Activated CD8-positive, alpha-beta memory T cell treated with anti-CD3 and anti-CD28 coated beads, Interleukin-2, amount 10 ng/mL, durations not matched to agents 7 days and 5 days (primary cell): ENCODE measurements at regions of chr1 and their contacts with region 1.

Region 1: DNA sequence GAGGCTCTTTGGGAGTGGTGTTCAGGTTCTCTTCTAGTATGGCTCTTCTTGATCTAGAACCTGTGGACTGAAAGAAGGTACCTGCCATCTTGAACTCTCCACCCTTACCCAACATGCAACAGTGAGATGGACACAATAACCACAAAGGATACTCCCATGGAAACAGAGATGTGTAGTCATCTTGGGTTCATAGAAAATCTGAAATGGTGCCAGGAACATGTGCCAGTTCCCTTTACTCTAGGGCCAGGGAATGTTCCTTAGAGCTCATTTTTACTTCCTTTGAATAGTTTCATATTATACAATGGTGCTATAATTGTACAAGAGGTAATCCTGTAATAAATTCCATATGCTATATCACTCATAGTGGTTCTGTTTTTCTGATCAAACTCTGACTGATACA is 13.2 kb upstream of the SCYL3 start:
- DNase-seq: no peak
- ATAC-seq: no peak
- H3K4me3 Mint-ChIP-seq: no peak overlapping the region
- H3K27ac Mint-ChIP-seq: no peak overlapping the region
- H3K4me1 Mint-ChIP-seq: peaks cover 45% of the 10 kb centered on the region
- H3K27me3 Mint-ChIP-seq: peaks cover 4% of the 10 kb centered on the region

Region 2: GRCh38 chr1:169779178-169779577 is 127.8 kb before region 1 on chr1:
- CTCF ChIA-PET with region 1: no interaction called
- DNase-seq: no peak
- ATAC-seq: no peak
- H3K4me3 Mint-ChIP-seq: no peak overlapping the region
- H3K27ac Mint-ChIP-seq: no peak overlapping the region
- H3K4me1 Mint-ChIP-seq: no peaks in the 10 kb centered on the region
- H3K27me3 Mint-ChIP-seq: peaks cover 26% of the 10 kb centered on the region

Region 3: DNA sequence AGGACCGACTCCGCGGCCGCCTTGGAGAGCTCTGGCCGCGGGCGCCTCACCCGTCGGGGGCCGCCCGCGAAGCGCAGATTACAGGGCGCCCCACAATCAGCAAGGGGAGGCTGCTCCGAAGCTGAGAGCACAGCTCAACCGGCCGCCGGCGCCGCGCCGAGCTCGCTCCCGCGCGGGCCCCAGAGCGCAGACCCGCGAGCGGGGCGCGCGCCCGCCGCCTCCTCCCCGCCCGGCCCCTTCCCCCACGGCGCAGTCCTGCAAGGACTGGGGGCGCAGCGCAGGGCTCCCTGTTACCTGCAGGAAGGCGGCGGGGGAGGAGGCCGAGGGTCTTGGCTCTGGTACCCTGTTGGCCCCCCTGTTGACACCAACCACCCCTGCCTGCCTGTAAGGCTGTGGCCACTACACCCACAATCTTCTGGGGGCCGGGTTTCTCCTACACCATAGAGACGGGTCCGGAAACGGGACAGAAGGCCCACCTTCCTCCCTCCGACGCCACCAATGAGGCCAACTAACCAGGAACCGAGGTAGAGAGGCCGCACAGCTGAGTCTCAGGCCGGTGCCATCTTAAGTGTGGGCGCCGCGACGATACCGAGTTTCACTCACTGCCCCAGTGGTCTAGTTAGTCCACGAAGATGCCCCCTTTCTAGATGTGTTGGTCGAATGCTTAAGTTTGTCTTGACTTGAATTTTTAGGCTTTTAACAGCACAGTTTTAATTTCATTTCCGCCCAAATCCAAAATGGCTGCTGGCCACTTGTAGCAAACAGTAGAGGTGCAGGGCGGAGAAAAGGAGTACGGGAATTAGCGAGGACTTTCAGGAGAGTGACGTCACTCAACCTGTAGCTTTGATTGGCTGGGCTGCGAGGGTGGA is 13.2 kb before region 1 on chr1 and contains the start of gene SCYL3:
- CTCF ChIA-PET with region 1: interaction called, 13 read pairs
- DNase-seq: peak; percentile 95
- ATAC-seq: peak; percentile 87
- H3K4me3 Mint-ChIP-seq: peak within 1 kb of the TSS; percentile 79
- H3K27ac Mint-ChIP-seq: peak within 1 kb of the TSS; percentile 99
- H3K4me1 Mint-ChIP-seq: peaks cover 52% of the 10 kb centered on the region
- H3K27me3 Mint-ChIP-seq: peaks cover 5% of the 10 kb centered on the region
- total RNA-seq, gene SCYL3: 13.6 to 14.9 TPM

Region 4: GRCh38 chr1:169928438-169929209 is 21.7 kb after region 1 on chr1:
- CTCF ChIA-PET with region 1: interaction called, 10 read pairs
- DNase-seq: no peak
- ATAC-seq: peak; percentile 67
- H3K4me3 Mint-ChIP-seq: no peak overlapping the region
- H3K27ac Mint-ChIP-seq: no peak overlapping the region
- H3K4me1 Mint-ChIP-seq: peaks cover 14% of the 10 kb centered on the region
- H3K27me3 Mint-ChIP-seq: no peaks in the 10 kb centered on the region